Endothelial cell of umbilical vein (primary cell): ENCODE measurements at regions of chr13 and their contacts with region 1.

Region 1: GRCh38 chr13:113863436-113864272 is at the start of gene GAS6:
- DNase-seq: peak; percentile 53
- H3K4me3 ChIP-seq: peak within 1 kb of the TSS; percentile 52 to 65 (median 56)
- H3K27ac ChIP-seq: no peak within 1 kb of the TSS
- H3K4me1 ChIP-seq: peaks cover 11% of the 10 kb centered on the region
- H3K27me3 ChIP-seq: peaks cover 17 to 27% of the 10 kb centered on the region in 2 experiments
- CTCF ChIP-seq: peak in 1 of 2 donors; percentile 19
- POLR2A ChIP-seq: no peak
- total RNA-seq, gene GAS6: 69.2 and 84.4 TPM in 2 replicates

Region 2: GRCh38 chr13:112959206-112959605 is 904.4 kb before region 1 on chr13:
- CTCF ChIA-PET with region 1: no interaction called
- POLR2A ChIA-PET with region 1: no interaction called
- dilution Hi-C with region 1: no loop called
- intact Hi-C with region 1: no loop called
- DNase-seq: no peak
- H3K4me3 ChIP-seq: no peak overlapping the region
- H3K27ac ChIP-seq: no peak overlapping the region
- H3K4me1 ChIP-seq: no peaks in the 10 kb centered on the region
- H3K27me3 ChIP-seq: no peaks in the 10 kb centered on the region
- CTCF ChIP-seq: no peak
- POLR2A ChIP-seq: no peak

Region 3: GRCh38 chr13:113904411-113904810 is 40.8 kb after region 1 on chr13:
- CTCF ChIA-PET with region 1: interaction called, 6 read pairs
- POLR2A ChIA-PET with region 1: no interaction called
- dilution Hi-C with region 1: no loop called
- intact Hi-C with region 1: loop called (anchors 2 kb)
- DNase-seq: peak; percentile 62
- H3K4me3 ChIP-seq: no peak overlapping the region
- H3K27ac ChIP-seq: no peak overlapping the region
- H3K4me1 ChIP-seq: no peaks in the 10 kb centered on the region
- H3K27me3 ChIP-seq: peaks cover 0 to 9% of the 10 kb centered on the region in 2 experiments
- CTCF ChIP-seq: peak; percentile 59 to 66
- POLR2A ChIP-seq: no peak

Region 4: DNA sequence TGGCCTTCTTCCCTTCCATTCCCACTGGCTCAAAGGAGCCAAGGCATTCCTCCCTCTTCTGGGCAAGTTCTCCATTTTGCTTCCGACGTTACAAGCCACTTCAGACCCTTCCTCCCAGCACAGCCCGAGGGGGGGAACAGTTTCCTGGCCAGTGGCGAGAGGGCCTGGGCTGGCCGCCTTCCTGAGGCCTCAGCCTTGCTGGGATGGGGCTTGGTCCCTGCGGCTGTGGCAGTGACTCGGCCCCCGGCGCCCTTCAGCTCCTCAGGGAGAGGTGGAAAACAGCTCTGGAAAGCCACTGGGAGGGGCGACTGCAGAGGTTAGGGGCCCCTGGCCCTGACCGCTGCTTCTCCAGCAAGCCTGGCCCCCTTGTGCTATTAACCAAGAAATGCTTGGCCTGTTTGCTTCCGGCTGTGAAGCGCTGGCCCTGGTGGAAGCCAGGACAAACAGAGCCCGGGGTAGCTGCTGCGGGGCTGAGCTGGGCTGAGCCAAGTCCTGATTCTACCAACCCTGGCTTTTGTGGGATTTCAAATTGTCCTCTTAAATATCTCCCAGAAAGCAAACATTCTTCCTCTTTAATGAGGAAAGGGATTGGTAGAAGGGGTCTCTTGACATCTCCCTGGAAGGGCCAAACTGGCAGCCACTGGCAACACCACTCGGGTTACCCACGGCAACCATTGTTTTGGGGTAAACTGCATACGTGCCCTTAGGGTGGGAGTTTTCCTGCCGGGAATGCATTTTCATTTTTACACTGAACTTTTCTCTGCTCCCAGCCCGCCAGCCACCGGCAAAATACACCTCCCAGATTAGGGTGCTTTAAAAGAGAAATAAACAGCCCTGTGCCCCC is 71.6 kb after region 1 on chr13:
- CTCF ChIA-PET with region 1: no interaction called
- POLR2A ChIA-PET with region 1: no interaction called
- dilution Hi-C with region 1: no loop called
- intact Hi-C with region 1: loop called (anchors 5 kb)
- DNase-seq: peak; percentile 50
- H3K4me3 ChIP-seq: no peak overlapping the region
- H3K27ac ChIP-seq: no peak overlapping the region
- H3K4me1 ChIP-seq: no peaks in the 10 kb centered on the region
- H3K27me3 ChIP-seq: peaks cover 3 to 5% of the 10 kb centered on the region in 2 experiments
- CTCF ChIP-seq: no peak
- POLR2A ChIP-seq: no peak